ENCODE measurements at regions of chr10 and their contacts with region 1.

Region 1: GRCh38 chr10:1368842-1369171 is 312.6 kb downstream of the WDR37 start:
- DNase-seq: peak; percentile 68
- ATAC-seq: peak; percentile 98
- H3K4me3 Mint-ChIP-seq: no peak overlapping the region
- H3K27ac Mint-ChIP-seq: no peak overlapping the region
- H3K4me1 Mint-ChIP-seq: peaks cover 2% of the 10 kb centered on the region
- H3K27me3 Mint-ChIP-seq: peaks cover 28% of the 10 kb centered on the region
- CTCF ChIP-seq: peak; percentile 60

Region 2: GRCh38 chr10:1109795-1110673 is 258.8 kb before region 1 on chr10:
- CTCF ChIA-PET with region 1: interaction called, 15 read pairs
- POLR2A ChIA-PET with region 1: no interaction called
- intact Hi-C with region 1: loop called (anchors 10 kb)
- DNase-seq: peak; percentile 90
- ATAC-seq: peak; percentile 98
- H3K4me3 Mint-ChIP-seq: peak overlapping the region; percentile 46
- H3K27ac Mint-ChIP-seq: peak overlapping the region; percentile 90
- H3K4me1 Mint-ChIP-seq: peaks cover 32% of the 10 kb centered on the region
- H3K27me3 Mint-ChIP-seq: no peaks in the 10 kb centered on the region
- CTCF ChIP-seq: peak; percentile 89

Region 3: GRCh38 chr10:1420661-1421362 is 52.0 kb after region 1 on chr10:
- CTCF ChIA-PET with region 1: interaction called, 15 read pairs
- POLR2A ChIA-PET with region 1: no interaction called
- intact Hi-C with region 1: no loop called
- DNase-seq: peak; percentile 82
- ATAC-seq: peak; percentile 98
- H3K4me3 Mint-ChIP-seq: peak overlapping the region; percentile 18
- H3K27ac Mint-ChIP-seq: no peak overlapping the region
- H3K4me1 Mint-ChIP-seq: no peaks in the 10 kb centered on the region
- H3K27me3 Mint-ChIP-seq: peaks cover 21% of the 10 kb centered on the region
- CTCF ChIP-seq: peak; percentile 69

Region 4: DNA sequence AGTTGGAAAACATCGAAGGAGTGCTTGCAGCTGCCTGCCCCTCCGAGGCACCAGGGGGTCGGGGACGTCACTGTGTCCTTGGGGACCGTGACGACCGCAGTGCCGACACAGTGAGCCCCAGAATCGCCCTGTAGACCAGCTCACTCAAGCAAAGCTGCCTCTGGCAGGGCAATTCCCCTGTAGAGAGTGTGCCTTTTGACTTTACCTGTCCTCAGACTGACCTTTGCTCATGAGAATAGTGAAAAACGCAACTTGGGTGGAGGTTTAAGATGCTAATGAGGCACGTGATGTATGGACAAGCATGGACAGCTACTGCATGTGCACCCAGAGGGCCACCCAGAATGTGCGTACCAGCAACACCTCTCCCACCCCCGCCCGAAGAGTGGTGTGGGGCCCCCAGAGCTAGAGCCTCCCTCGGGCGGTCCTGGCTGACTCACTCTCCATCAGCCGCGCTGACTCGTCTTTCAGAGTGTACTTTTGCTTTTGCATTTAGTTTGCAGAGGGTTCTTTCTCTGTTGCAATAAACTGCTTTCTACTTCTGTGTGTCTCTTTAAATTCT is 96.7 kb after region 1 on chr10:
- CTCF ChIA-PET with region 1: no interaction called
- POLR2A ChIA-PET with region 1: no interaction called
- intact Hi-C with region 1: no loop called
- DNase-seq: no peak
- ATAC-seq: no peak
- H3K4me3 Mint-ChIP-seq: no peak overlapping the region
- H3K27ac Mint-ChIP-seq: no peak overlapping the region
- H3K4me1 Mint-ChIP-seq: peaks cover 1% of the 10 kb centered on the region
- H3K27me3 Mint-ChIP-seq: peaks cover 3% of the 10 kb centered on the region
- CTCF ChIP-seq: no peak

Region 5: GRCh38 chr10:1648648-1649047 is 279.8 kb after region 1 on chr10:
- CTCF ChIA-PET with region 1: no interaction called
- POLR2A ChIA-PET with region 1: no interaction called
- intact Hi-C with region 1: no loop called
- DNase-seq: no peak
- ATAC-seq: no peak
- H3K4me3 Mint-ChIP-seq: no peak overlapping the region
- H3K27ac Mint-ChIP-seq: no peak overlapping the region
- H3K4me1 Mint-ChIP-seq: no peaks in the 10 kb centered on the region
- H3K27me3 Mint-ChIP-seq: peaks cover 6% of the 10 kb centered on the region
- CTCF ChIP-seq: no peak

Measured in activated CD8-positive, alpha-beta T cell treated with anti-CD3 and anti-CD28 coated beads for 36 hours (primary cell).